PC-9 (cell line): ENCODE measurements at regions of chr12 and their contacts with region 1.

Region 1: DNA sequence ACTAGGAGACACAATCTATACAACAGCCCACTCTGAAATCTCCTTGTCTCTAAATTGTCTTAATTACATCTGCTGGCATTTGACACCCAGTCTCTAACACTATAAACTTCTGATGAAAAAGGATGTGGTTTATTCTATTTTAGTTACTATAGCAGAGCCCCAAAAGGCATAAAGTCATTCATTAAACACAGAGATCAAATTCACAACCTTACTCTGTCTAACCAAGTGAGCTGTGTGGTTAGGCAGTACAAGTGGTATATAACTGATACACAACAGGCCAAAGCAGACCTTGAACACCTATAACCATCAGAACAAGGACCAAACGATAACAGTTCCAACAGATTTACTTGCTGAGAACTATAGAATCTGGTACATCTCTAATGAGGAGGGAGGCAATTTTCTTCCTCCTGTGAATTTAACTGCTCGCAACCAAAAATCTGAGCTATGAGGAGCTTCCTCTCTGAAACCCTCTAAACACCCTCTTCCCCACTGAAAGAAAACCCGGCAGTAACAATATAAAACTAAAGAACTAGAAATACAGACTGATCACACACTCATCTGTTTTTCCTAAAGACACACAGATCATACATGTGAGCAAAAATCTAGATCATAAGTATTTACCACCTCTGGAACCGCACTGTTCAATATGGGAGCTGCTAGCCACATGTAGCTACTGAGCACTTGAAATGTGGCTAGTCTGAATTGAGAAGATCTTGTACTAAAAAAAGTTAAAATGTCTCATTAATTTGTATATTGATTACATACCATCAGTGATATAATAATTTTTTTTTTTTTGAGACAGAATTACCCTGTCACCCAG is 17.7 kb downstream of the SPPL3 start:
- DNase-seq: no peak
- H3K4me3 ChIP-seq: no peak overlapping the region
- H3K27ac ChIP-seq: no peak overlapping the region
- H3K4me1 ChIP-seq: no peaks in the 10 kb centered on the region
- H3K27me3 ChIP-seq: no peaks in the 10 kb centered on the region
- CTCF ChIP-seq: no peak

Region 2: GRCh38 chr12:120116792-120117651 is 769.4 kb before region 1 on chr12:
- CTCF ChIA-PET with region 1: interaction called, 16 read pairs
- POLR2A ChIA-PET with region 1: no interaction called
- intact Hi-C with region 1: no loop called
- DNase-seq: peak; percentile 70 to 98
- H3K4me3 ChIP-seq: peak overlapping the region; percentile 85
- H3K27ac ChIP-seq: peak overlapping the region; percentile 69
- H3K4me1 ChIP-seq: peaks cover 28% of the 10 kb centered on the region
- H3K27me3 ChIP-seq: no peaks in the 10 kb centered on the region
- CTCF ChIP-seq: no peak